ENCODE measurements at regions of chr11 and their contacts with region 1.

Region 1: DNA sequence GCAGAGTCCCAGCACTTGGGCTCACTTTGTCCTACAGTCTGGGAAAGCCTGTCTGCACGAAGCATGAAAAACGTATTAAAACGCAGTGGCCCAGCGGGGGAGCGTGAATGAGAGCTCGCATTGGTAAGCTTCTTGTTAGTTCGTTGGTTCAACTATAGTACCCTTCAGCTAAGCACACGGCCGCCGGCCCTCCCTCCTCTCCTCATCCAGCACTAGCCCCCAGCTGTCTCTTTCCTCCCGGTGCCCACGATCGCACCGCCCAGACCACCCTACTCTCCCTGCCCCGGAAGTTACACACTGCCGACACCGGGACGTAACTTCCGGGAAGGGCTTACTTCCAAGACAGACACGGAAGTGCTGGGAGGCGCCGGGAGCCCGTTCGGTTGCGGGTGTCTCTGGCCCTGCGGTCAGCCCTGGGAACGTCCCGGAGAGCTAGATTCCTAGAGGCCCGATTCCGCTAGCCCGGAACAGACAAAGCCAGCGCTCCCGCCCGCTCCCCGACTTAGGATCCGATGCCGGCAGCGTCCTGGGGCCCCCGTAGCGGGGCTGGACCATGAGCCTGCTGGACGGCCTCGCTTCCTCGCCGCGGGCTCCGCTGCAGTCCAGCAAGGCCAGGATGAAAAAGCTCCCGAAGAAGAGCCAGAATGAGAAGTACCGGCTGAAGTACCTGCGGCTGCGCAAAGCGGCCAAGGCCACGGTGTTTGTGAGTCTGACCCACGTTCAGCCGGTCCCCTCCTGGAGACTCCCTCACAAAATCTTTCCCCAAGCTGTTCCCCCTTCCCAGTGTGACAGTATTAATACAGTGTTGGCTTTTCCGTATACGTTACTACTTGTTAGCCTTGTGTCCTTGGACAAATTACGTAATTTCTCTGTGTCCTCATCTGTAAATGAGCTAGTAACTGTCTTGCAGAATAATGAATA is at the start of gene TBRG1:
- DNase-seq: peak; percentile 80
- H3K4me3 Mint-ChIP-seq: peak within 1 kb of the TSS; percentile 97
- H3K27ac Mint-ChIP-seq: peak within 1 kb of the TSS; percentile 95
- H3K4me1 Mint-ChIP-seq: peaks cover 29% of the 10 kb centered on the region
- H3K27me3 Mint-ChIP-seq: peaks cover 14% of the 10 kb centered on the region
- total RNA-seq, gene TBRG1: 35.1 and 35.4 TPM in 2 replicates

Region 2: DNA sequence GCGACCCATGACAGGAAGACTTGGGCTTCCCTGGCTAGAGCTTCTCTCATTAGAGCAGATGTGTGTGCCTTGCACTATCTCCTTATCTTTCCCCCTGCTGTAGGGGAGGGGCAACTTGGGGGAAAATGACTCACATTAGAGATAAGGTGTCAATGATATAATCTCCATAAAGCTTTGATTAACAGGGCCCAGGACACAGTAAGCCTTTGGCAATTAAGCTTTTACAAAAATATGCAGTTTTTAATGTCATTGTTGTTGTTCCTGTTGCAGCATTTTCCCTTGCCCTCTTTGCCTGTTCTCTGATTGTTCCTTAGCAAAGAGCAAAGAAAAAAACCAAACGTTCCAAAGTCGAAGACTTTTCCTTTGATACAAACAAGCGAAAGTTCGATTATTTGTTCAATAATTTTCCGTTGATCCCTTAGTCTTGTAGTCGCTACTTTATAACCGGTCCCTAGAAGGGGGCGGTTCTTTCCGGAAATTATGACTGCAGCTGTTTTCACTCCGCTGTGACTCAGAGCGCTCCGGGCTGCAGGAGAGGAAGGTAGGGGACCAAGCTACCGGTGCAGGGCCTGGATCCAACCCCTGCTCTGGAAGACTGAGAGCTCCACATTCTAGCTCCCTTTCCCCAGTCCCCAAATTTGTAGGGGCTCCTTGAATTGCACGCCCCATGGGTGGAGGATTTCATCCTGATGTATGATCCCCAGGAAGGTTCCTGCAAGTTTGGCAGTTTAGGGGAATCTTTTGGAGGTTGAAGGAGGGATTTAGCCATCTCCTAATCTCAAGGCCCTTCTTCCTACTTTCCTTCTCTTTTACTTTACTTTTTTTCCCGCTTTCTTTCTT is 507.6 kb before region 1 on chr11 and contains the start of gene VWA5A:
- intact Hi-C with region 1: loop called (anchors 5 kb)
- DNase-seq: peak; percentile 71
- H3K4me3 Mint-ChIP-seq: peak within 1 kb of the TSS; percentile 94
- H3K27ac Mint-ChIP-seq: peak within 1 kb of the TSS; percentile 92
- H3K4me1 Mint-ChIP-seq: peaks cover 34% of the 10 kb centered on the region
- H3K27me3 Mint-ChIP-seq: peaks cover 7% of the 10 kb centered on the region
- total RNA-seq, gene VWA5A: 7.9 and 8.0 TPM in 2 replicates

Region 3: DNA sequence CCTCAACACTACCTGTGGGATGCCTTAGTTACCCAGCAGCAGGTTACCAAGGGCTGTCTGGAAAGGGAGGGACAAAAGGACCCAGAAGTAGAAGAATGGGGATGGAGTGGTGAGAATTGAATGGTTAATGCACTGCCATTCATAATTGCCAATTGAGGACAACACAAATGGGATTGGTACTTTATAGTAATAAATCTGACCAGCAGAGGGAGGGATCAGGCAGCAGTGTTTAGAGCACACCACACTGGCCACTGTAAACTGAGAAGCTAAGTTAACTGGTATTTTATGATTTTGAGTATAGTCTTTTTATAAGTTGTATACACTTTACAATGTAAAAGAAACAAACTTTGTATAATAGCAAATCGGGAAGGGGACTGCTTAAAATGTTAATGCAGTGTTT is 10.6 kb after region 1 on chr11:
- intact Hi-C with region 1: no loop called
- DNase-seq: no peak
- H3K4me3 Mint-ChIP-seq: no peak overlapping the region
- H3K27ac Mint-ChIP-seq: no peak overlapping the region
- H3K4me1 Mint-ChIP-seq: no peaks in the 10 kb centered on the region
- H3K27me3 Mint-ChIP-seq: no peaks in the 10 kb centered on the region

Region 4: DNA sequence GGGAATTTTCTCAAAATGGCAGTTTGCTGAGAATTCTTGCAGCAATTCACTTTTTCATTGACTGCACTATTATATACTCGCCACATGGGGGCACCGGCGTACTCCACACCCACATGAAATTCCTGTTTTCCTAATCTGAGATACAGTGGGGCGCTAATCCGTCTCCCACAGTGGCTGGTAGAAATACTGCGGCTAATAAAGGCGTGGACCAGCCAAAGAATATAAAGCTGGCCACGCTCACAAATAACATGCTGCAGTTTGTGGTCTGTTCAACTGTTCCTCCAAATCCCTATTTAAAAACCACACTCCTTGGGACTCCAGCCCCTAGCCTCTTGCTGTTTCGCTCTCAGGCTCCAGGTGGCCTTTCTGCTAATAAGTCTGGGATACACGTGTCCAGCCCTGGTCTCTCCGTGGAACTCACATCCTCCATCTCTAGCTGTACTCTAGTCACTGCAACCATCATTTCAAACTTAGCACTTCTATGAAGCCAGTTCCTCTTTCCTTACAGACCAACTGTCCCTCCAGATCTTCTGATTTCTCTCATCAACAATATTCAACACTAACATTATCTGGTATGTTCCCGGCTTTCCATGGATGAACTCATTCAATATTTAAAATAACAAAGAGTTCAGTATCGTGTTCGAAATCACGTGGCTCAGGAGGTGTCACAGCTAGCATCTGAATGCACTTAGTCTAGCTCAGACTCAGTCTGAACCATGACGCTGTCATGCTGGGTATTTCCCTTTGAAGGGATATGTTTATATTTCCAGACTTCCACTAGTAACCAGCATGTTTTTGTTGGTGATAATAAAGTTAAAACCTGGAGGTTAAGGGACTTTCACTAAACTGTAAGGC is 21.9 kb after region 1 on chr11:
- intact Hi-C with region 1: no loop called
- DNase-seq: no peak
- H3K4me3 Mint-ChIP-seq: no peak overlapping the region
- H3K27ac Mint-ChIP-seq: no peak overlapping the region
- H3K4me1 Mint-ChIP-seq: peaks cover 8% of the 10 kb centered on the region
- H3K27me3 Mint-ChIP-seq: no peaks in the 10 kb centered on the region

Region 5: DNA sequence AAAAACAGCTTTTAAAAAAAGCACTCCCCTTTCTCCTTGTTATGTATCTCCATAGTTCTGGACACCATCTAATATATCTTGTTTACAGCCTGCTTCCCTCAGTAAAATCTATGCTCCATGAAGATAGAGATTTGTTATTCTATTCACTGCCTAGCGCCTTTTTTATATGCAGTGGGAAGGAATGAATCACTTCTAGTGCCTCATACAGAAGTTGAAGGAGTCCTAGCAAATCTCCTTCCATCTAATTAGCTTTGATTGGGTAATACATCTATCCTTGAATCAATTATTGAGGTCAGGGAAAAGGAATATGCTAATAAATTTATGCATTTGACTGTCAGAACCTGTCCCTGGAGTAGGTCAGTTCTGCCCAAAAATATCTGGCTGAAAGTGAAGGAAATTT is 76.8 kb after region 1 on chr11:
- intact Hi-C with region 1: no loop called
- DNase-seq: no peak
- H3K4me3 Mint-ChIP-seq: no peak overlapping the region
- H3K27ac Mint-ChIP-seq: no peak overlapping the region
- H3K4me1 Mint-ChIP-seq: no peaks in the 10 kb centered on the region
- H3K27me3 Mint-ChIP-seq: peaks cover 8% of the 10 kb centered on the region

Region 6: DNA sequence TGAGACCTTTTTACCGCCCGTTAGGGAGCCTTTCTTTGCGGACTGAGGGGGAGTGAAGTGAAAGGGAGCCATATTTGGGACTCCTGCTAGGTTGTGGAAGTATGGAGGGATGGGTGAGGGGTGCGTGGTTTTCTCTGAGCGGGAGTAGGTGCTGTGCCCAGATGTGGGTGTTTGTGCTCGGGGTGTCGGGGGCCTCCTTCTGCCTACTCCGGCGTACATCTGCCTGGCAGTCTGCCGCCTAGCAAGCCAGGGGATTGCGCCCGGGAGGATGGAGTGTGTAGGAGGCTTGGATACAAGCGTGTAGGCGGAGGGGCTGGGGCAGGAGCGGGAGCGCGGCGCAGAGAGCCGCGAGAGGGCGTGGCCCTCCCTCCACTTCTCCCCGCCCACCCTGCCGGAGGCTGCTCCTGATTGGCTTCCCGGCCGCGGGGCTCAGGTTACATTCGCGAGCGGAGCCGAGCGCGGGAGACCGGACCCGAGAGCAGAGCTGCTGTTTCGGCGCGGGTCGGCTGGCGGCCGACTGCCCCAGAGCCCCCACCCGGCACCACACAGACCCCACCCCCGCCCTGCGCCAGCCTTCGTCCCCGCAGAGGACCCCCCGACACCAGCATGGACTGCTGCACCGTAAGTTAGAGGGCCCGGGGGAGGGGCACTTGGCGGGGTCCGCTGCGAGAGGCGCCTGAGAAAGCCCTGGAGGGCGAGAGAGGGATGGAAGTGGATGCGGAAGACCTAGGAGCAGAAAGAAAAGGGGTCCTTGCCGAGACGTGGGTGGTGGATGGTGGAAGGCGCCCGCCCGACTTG is 116.9 kb after region 1 on chr11 and contains the start of gene NRGN:
- intact Hi-C with region 1: loop called (anchors 2 kb)
- DNase-seq: peak; percentile 80
- H3K4me3 Mint-ChIP-seq: peak within 1 kb of the TSS; percentile 85
- H3K27ac Mint-ChIP-seq: peak within 1 kb of the TSS; percentile 54
- H3K4me1 Mint-ChIP-seq: peaks cover 25% of the 10 kb centered on the region
- H3K27me3 Mint-ChIP-seq: peaks cover 38% of the 10 kb centered on the region
- total RNA-seq, gene NRGN: 3.9 and 6.1 TPM in 2 replicates

Region 7: DNA sequence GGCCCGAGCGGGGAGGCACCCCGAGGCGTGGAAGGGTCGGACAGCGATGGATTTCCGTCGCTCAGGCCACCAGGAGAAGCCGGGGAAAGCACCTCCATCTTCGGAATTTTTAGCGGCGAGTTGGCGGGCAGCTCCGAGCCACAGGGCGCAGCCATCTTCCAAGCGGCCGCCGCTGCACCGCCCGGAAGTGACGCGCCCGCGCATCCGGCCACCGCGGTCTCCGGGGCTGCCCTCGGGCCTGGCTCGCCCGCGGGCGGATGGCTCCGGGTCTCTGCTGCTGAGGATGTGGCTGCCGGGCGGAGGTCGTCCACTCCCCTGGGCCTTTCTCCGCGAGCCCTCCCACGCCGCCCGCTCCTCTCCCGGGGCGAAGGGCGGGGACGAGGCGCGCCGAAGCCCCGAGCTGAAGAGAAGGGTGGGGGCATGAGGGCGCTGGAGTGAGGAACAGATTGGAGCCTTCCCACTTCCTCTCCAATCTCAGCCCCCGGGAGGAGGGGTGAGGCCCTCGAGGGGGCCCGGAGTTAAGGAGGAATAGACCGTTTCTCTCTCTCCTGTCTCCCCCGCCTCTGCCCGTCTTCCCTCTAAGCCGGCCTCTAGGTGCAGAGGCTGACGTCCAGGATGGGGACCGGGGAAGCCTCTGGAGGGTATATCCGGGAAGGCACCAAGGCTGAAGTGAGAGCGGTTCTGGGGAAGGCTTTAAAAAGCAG is 177.6 kb after region 1 on chr11 and contains the start of gene MSANTD2:
- intact Hi-C with region 1: loop called (anchors 1 kb)
- DNase-seq: peak; percentile 79
- H3K4me3 Mint-ChIP-seq: peak within 1 kb of the TSS; percentile 91
- H3K27ac Mint-ChIP-seq: peak within 1 kb of the TSS; percentile 92
- H3K4me1 Mint-ChIP-seq: peaks cover 28% of the 10 kb centered on the region
- H3K27me3 Mint-ChIP-seq: peaks cover 8% of the 10 kb centered on the region
- total RNA-seq, gene MSANTD2: 8.9 and 9.7 TPM in 2 replicates

Region 8: DNA sequence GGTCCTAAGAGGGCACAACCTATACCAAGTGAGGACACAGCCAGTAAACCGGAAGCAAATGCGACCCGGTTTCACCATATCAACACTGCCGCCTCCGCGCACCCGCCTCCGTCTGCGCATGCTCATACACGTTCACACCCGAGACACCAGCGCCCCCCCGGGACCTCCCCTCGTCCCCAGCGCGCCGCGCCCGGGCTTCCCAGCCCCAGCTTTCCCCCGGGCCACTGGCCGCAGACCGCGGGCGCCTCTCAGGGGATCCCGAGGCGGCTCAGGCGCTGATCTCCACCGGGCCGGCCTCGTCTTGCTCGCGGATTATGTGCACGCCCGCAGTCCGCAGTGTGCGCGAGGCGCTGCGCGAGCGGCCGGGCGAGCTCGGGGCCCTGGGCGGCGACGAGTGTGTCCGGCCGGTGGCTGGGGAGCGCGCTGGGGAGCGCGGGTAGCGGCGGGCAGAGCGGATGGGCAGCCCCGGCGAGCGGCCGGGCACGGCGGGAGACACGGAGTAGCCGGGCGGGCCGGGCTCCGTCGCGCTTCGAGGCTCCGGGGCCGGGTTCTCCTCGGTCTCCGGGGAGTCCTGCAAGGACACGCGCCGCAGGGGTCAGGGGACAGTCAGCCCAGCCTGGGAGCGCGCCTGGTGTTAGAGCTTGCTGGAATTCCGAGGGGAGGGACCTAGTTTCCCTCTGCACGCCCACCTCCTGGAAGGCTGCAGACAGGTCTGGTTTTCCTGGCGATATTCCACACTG is 298.2 kb after region 1 on chr11:
- intact Hi-C with region 1: loop called (anchors 1 kb)
- DNase-seq: peak; percentile 62
- H3K4me3 Mint-ChIP-seq: no peak overlapping the region
- H3K27ac Mint-ChIP-seq: no peak overlapping the region
- H3K4me1 Mint-ChIP-seq: peaks cover 10% of the 10 kb centered on the region
- H3K27me3 Mint-ChIP-seq: peaks cover 8% of the 10 kb centered on the region

Measured in activated T-helper 1 cell treated with anti-CD3 and anti-CD28 coated beads, Interleukin-12 subunit alpha, Interleukin-12 subunit beta, Interleukin-2, Interleukin-4 antibody, amounts not matched to agents 30 ng/mL and 10 ng/mL and 1 ng/mL, durations not matched to agents 14 hours and 24 hours and 36 hours (primary cell).